B cell (primary cell): ENCODE measurements at regions of chr17 and their contacts with region 1.

Region 1: GRCh38 chr17:40531051-40531991 is 29.9 kb upstream of the TNS4 start:
- DNase-seq: peak; percentile 75
- ATAC-seq: peak; percentile 15
- H3K4me3 ChIP-seq: no peak overlapping the region
- H3K4me3 Mint-ChIP-seq: peak overlapping the region; percentile 69
- H3K27ac ChIP-seq: peak overlapping the region; percentile 72 to 80
- H3K27ac Mint-ChIP-seq: peak overlapping the region; percentile 87
- H3K4me1 ChIP-seq: peaks cover 45 to 51% of the 10 kb centered on the region in 2 donors
- H3K4me1 Mint-ChIP-seq: peaks cover 61% of the 10 kb centered on the region
- H3K27me3 ChIP-seq: no peaks in the 10 kb centered on the region
- H3K27me3 Mint-ChIP-seq: no peaks in the 10 kb centered on the region
- CTCF ChIP-seq: no peak

Region 2: GRCh38 chr17:40303009-40303657 is 228.2 kb before region 1 on chr17:
- CTCF ChIA-PET with region 1: interaction called, 38 read pairs
- POLR2A ChIA-PET with region 1: no interaction called
- intact Hi-C with region 1: loop called (anchors 1 kb)
- DNase-seq: peak; percentile 86
- ATAC-seq: peak; percentile 81
- H3K4me3 ChIP-seq: no peak overlapping the region
- H3K4me3 Mint-ChIP-seq: no peak overlapping the region
- H3K27ac ChIP-seq: no peak overlapping the region
- H3K27ac Mint-ChIP-seq: no peak overlapping the region
- H3K4me1 ChIP-seq: peaks cover 5 to 6% of the 10 kb centered on the region in 2 donors
- H3K4me1 Mint-ChIP-seq: peaks cover 7% of the 10 kb centered on the region
- H3K27me3 ChIP-seq: no peaks in the 10 kb centered on the region
- H3K27me3 Mint-ChIP-seq: no peaks in the 10 kb centered on the region
- CTCF ChIP-seq: peak; percentile 83

Region 3: DNA sequence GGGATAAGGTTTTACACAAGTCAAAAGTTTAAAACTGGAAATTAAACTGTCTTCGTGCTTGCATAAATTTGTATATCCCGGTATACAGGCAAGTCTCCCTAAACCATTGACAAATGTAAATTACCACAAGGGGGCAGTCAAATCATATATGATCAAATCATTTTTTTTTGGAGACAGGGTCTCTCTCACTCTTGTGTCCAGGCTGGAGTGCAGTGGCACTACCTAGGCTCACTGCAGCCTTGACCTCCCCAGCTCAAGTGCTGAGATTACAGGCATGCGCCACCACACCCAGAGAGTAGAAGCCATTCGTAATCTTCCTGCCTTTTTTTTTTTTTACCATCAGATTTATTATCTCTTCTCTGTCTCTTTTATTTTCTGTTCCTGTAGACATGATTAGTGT is 132.1 kb before region 1 on chr17:
- CTCF ChIA-PET with region 1: interaction called, 94 read pairs
- POLR2A ChIA-PET with region 1: no interaction called
- intact Hi-C with region 1: loop called (anchors 1 kb)
- DNase-seq: peak; percentile 74
- ATAC-seq: peak; percentile 54
- H3K4me3 ChIP-seq: no peak overlapping the region
- H3K4me3 Mint-ChIP-seq: no peak overlapping the region
- H3K27ac ChIP-seq: no peak overlapping the region
- H3K27ac Mint-ChIP-seq: no peak overlapping the region
- H3K4me1 ChIP-seq: peaks cover 0 to 8% of the 10 kb centered on the region in 2 donors
- H3K4me1 Mint-ChIP-seq: peaks cover 7% of the 10 kb centered on the region
- H3K27me3 ChIP-seq: no peaks in the 10 kb centered on the region
- H3K27me3 Mint-ChIP-seq: no peaks in the 10 kb centered on the region
- CTCF ChIP-seq: peak; percentile 88

Region 4: DNA sequence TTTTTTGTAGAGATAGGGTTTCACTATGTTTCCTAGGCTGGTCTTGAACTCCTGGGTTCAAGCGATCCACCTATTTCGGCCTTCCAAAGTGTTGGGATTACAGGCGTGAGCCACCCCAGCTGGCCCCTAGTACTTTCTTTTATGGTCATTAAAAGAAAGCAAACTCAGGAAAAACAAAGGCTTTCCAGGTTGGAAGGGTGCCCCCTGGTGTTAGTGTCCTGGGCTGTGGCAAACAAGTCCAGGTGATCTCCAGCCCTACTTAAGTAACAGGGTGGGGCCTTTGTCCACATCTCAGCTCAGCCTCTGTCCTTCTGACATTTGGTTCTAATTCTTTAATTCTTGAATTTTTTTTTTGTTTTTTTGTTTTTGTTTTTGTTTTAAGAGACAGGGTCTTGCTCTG is 81.1 kb before region 1 on chr17:
- CTCF ChIA-PET with region 1: interaction called, 28 read pairs
- POLR2A ChIA-PET with region 1: no interaction called
- intact Hi-C with region 1: no loop called
- DNase-seq: peak; percentile 49
- ATAC-seq: peak; percentile 28
- H3K4me3 ChIP-seq: no peak overlapping the region
- H3K4me3 Mint-ChIP-seq: no peak overlapping the region
- H3K27ac ChIP-seq: no peak overlapping the region
- H3K27ac Mint-ChIP-seq: no peak overlapping the region
- H3K4me1 ChIP-seq: peaks cover 7 to 15% of the 10 kb centered on the region in 2 donors
- H3K4me1 Mint-ChIP-seq: peaks cover 22% of the 10 kb centered on the region
- H3K27me3 ChIP-seq: peaks cover 0 to 6% (median 0%) of the 10 kb centered on the region in 4 experiments
- H3K27me3 Mint-ChIP-seq: no peaks in the 10 kb centered on the region
- CTCF ChIP-seq: peak; percentile 58

Region 5: DNA sequence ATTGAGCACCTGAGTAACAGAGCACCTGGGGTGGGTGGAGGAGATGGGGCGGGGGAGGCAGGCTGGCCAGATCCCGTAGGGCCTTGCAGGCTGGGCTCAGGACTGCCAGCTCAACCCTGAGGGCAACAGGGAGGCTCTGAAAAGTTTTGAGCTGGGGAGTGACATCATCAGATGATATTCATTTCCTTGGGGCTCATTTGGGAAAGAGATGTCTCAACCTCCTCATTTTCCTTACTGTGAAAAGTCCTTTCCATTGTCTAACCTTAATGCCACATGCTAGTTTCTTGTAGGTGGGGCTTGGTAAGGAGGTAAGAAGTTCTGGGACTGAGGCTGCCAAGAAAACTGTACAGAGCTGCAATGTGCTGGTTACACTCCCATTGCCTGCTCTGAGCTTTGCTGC is 33.6 kb before region 1 on chr17:
- CTCF ChIA-PET with region 1: interaction called, 10 read pairs
- POLR2A ChIA-PET with region 1: no interaction called
- intact Hi-C with region 1: no loop called
- DNase-seq: no peak
- ATAC-seq: no peak
- H3K4me3 ChIP-seq: no peak overlapping the region
- H3K4me3 Mint-ChIP-seq: no peak overlapping the region
- H3K27ac ChIP-seq: no peak overlapping the region
- H3K27ac Mint-ChIP-seq: no peak overlapping the region
- H3K4me1 ChIP-seq: peaks cover 7 to 8% of the 10 kb centered on the region in 2 donors
- H3K4me1 Mint-ChIP-seq: peaks cover 5% of the 10 kb centered on the region
- H3K27me3 ChIP-seq: peaks cover 0 to 23% (median 10%) of the 10 kb centered on the region in 4 experiments
- H3K27me3 Mint-ChIP-seq: peaks cover 27% of the 10 kb centered on the region
- CTCF ChIP-seq: no peak

Region 6: GRCh38 chr17:40551879-40552768 is 20.8 kb after region 1 on chr17:
- CTCF ChIA-PET with region 1: interaction called, 329 read pairs
- POLR2A ChIA-PET with region 1: interaction called, 60 read pairs
- intact Hi-C with region 1: loop called (anchors 2 kb)
- DNase-seq: peak; percentile 52
- ATAC-seq: no peak
- H3K4me3 ChIP-seq: no peak overlapping the region
- H3K4me3 Mint-ChIP-seq: peak overlapping the region; percentile 84
- H3K27ac ChIP-seq: peak overlapping the region; percentile 83 to 98
- H3K27ac Mint-ChIP-seq: peak overlapping the region; percentile 92
- H3K4me1 ChIP-seq: peaks cover 98 to 100% of the 10 kb centered on the region in 2 donors
- H3K4me1 Mint-ChIP-seq: peaks cover 100% of the 10 kb centered on the region
- H3K27me3 ChIP-seq: no peaks in the 10 kb centered on the region
- H3K27me3 Mint-ChIP-seq: no peaks in the 10 kb centered on the region
- CTCF ChIP-seq: no peak

Region 7: DNA sequence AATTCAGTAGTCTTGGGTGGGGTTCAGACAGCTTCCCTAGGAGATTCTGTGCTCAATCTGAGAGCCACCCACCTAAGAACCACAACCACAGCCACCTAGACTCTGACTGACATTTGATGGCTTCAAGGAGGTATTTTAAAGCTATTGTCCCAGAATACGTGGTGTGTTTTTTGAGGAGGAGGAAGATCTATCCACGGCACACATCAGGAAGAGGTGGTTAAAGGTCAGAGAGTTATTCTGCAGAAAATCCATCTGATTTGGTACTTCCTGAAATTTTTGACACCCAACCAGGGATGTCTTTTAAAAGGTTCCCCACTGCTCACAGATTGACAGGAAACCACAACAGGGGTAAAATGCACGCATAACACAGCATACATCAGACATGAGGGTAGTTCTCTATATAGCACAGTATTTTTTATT is 91.2 kb after region 1 on chr17:
- CTCF ChIA-PET with region 1: interaction called, 93 read pairs
- POLR2A ChIA-PET with region 1: interaction called, 4 read pairs
- intact Hi-C with region 1: no loop called
- DNase-seq: peak; percentile 62
- ATAC-seq: peak; percentile 23
- H3K4me3 ChIP-seq: no peak overlapping the region
- H3K4me3 Mint-ChIP-seq: peak overlapping the region; percentile 69
- H3K27ac ChIP-seq: no peak overlapping the region
- H3K27ac Mint-ChIP-seq: peak overlapping the region; percentile 77
- H3K4me1 ChIP-seq: peaks cover 57 to 58% of the 10 kb centered on the region in 2 donors
- H3K4me1 Mint-ChIP-seq: peaks cover 59% of the 10 kb centered on the region
- H3K27me3 ChIP-seq: no peaks in the 10 kb centered on the region
- H3K27me3 Mint-ChIP-seq: no peaks in the 10 kb centered on the region
- CTCF ChIP-seq: no peak